K562 (cell line): ENCODE measurements at regions of chr4 and their contacts with region 1.

Region 1: DNA sequence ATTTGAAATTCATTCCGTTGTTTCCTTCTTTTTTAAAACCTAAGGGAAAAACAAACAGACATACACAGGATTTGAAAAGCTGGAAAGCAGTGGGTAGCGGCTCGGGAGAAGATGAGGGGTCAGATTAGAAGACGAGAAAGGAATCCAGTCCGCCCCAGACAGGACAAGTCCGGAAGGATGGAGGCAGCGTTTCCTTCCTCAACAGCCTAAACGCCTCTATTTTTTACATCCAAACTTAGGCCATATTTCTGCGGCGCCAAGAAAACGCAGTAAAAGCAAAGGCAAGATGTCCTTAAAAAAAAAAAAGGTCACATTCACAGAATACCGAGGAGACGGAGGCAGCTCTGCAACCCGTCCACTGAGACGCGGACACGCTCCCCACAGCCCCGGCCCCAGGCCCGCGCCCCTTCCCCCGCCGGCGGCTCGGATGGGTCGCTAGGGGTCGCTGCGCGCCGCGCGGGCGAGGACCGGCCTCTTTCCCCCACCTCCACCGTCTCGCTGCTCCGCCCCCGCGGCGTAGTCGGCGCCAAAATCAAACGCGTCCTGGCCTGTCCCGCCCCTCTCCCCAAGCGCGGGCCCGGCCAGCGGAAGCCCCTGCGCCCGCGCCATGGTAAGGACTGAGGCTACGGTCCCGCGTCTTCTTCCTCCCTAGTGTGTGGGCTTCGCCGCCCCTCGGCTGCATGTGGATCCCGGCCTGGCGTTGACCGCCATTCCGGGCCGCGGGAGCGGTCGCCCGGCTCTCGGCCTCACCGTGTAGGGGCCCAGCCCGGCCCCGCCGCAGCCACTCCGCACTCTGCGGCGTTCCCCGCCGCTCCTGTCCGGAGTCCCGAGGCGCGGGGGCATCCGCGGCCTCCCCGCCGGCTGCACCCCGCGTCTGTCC is at the start of gene MND1:
- DNase-seq: peak; percentile 92 to 95 (median 93)
- ATAC-seq: peak; percentile 92
- H3K4me3 ChIP-seq: peak within 1 kb of the TSS; percentile 85
- H3K27ac ChIP-seq: peak within 1 kb of the TSS; percentile 92
- H3K4me1 ChIP-seq: peaks cover 16 to 33% of the 10 kb centered on the region in 2 experiments
- H3K27me3 ChIP-seq: no peaks in the 10 kb centered on the region
- CTCF ChIP-seq: peak; percentile 76 to 89 (median 81)
- EP300 ChIP-seq: no peak
- POLR2A ChIP-seq: peak; percentile 90
- RAD21 ChIP-seq: peak; percentile 69 to 71
- polyA plus RNA-seq, gene MND1: 59.9 to 74.8 TPM

Region 2: GRCh38 chr4:153189016-153189801 is 155.2 kb before region 1 on chr4:
- CTCF ChIA-PET with region 1: no interaction called
- POLR2A ChIA-PET with region 1: no interaction called
- in situ Hi-C with region 1: no loop called
- intact Hi-C with region 1: no loop called
- DNase-seq: no peak
- ATAC-seq: no peak; the same call in 2 of the 3 replicates
- H3K4me3 ChIP-seq: no peak overlapping the region
- H3K27ac ChIP-seq: no peak overlapping the region
- H3K4me1 ChIP-seq: no peaks in the 10 kb centered on the region; a peak in 1 of 5 replicates
- H3K27me3 ChIP-seq: peaks cover 24 to 43% of the 10 kb centered on the region in 2 experiments
- CTCF ChIP-seq: no peak
- EP300 ChIP-seq: no peak
- POLR2A ChIP-seq: no peak
- RAD21 ChIP-seq: no peak

Region 3: GRCh38 chr4:153409924-153410501 is 65.6 kb after region 1 on chr4:
- CTCF ChIA-PET with region 1: no interaction called
- POLR2A ChIA-PET with region 1: no interaction called
- in situ Hi-C with region 1: no loop called
- intact Hi-C with region 1: loop called (anchors 5 kb)
- DNase-seq: peak; percentile 60 to 92 (median 72)
- ATAC-seq: peak; percentile 93
- H3K4me3 ChIP-seq: no peak overlapping the region
- H3K27ac ChIP-seq: peak overlapping the region; percentile 92
- H3K4me1 ChIP-seq: peaks cover 0 to 17% of the 10 kb centered on the region in 2 experiments; a peak in 3 of 5 replicates
- H3K27me3 ChIP-seq: no peaks in the 10 kb centered on the region
- CTCF ChIP-seq: no peak
- EP300 ChIP-seq: peak; percentile 52; the same call in 1 of the 2 replicates
- POLR2A ChIP-seq: no peak
- RAD21 ChIP-seq: no peak

Region 4: GRCh38 chr4:153432968-153433753 is 88.8 kb after region 1 on chr4:
- CTCF ChIA-PET with region 1: no interaction called
- POLR2A ChIA-PET with region 1: no interaction called
- in situ Hi-C with region 1: no loop called
- intact Hi-C with region 1: loop called (anchors 1 kb)
- DNase-seq: peak; percentile 50 to 85 (median 70)
- ATAC-seq: peak; percentile 95
- H3K4me3 ChIP-seq: no peak overlapping the region
- H3K27ac ChIP-seq: peak overlapping the region; percentile 49; the same call in 1 of the 3 replicates
- H3K4me1 ChIP-seq: peaks cover 10 to 11% of the 10 kb centered on the region in 2 experiments; a peak in 4 of 5 replicates
- H3K27me3 ChIP-seq: no peaks in the 10 kb centered on the region
- CTCF ChIP-seq: peak; percentile 88 to 93 (median 88)
- EP300 ChIP-seq: no peak; the same call in 1 of the 2 replicates
- POLR2A ChIP-seq: no peak
- RAD21 ChIP-seq: peak; percentile 84 to 94

Region 5: GRCh38 chr4:153466081-153466948 is 121.9 kb after region 1 on chr4 and contains the start of gene TMEM131L:
- CTCF ChIA-PET with region 1: no interaction called
- POLR2A ChIA-PET with region 1: interaction called, 4 read pairs
- in situ Hi-C with region 1: no loop called
- intact Hi-C with region 1: loop called (anchors 10 kb)
- DNase-seq: peak; percentile 91 to 94 (median 92)
- ATAC-seq: peak; percentile 82
- H3K4me3 ChIP-seq: peak within 1 kb of the TSS; percentile 83
- H3K27ac ChIP-seq: peak within 1 kb of the TSS; percentile 86
- H3K4me1 ChIP-seq: peaks cover 29 to 40% of the 10 kb centered on the region in 2 experiments
- H3K27me3 ChIP-seq: no peaks in the 10 kb centered on the region
- CTCF ChIP-seq: peak; percentile 30 to 68 (median 46); a peak in 3 of 6 replicates
- EP300 ChIP-seq: no peak; the same call in 1 of the 2 replicates
- POLR2A ChIP-seq: peak; percentile 78
- RAD21 ChIP-seq: peak in 1 of 2 experiments; percentile 41; a peak in 2 of 4 replicates
- polyA plus RNA-seq, gene TMEM131L: 1.2 to 1.6 TPM

Region 6: DNA sequence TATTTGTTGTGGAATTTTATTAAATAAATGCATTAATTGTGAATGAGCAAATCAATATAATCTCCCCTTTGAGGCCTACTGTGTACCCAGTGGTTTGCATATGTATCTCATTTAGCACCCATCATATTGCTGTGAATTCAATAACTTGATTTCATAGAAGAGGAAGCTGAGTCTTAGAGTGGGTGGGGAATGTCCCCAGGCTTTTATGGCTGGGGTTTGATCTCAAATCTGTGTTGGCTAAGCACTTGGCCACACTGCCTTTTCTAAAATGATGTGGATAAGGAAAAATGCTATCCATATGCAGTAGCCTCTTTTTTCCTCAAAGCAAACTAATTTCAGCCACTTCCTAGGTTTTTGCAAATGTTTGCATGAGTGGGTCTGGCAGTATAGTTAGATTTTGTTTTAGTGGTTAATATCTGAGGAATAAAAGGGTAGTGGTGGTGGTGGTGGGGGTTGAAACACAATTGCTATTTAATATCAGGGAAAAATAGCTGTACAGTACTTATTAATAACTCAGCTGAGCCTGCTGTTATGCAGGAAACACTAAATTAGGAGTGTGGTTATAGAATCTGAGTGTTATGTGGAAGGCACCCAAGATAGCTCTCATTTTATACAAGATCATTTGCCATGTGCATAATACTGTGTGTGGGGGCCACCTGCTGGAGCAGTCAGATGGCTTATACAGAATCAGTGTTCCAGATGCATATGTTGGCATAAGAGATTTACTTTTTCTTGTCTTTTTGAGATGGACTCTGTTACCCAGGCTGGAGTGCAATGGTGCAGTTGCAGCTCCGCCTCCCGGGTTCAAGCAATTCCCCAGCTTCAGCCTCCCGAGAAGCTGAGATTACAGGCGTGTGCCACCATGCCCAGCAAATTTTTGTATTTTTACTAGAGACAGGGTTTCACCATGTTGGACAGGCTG is 229.8 kb after region 1 on chr4:
- CTCF ChIA-PET with region 1: interaction called, 44 read pairs
- POLR2A ChIA-PET with region 1: no interaction called
- in situ Hi-C with region 1: loop called (anchors 5 kb)
- intact Hi-C with region 1: loop called (anchors 1 kb)
- DNase-seq: peak in 2 of 4 experiments; percentile 22 to 48
- ATAC-seq: peak; percentile 87
- H3K4me3 ChIP-seq: no peak overlapping the region
- H3K27ac ChIP-seq: no peak overlapping the region
- H3K4me1 ChIP-seq: peaks cover 0 to 5% of the 10 kb centered on the region in 2 experiments; a peak in 1 of 5 replicates
- H3K27me3 ChIP-seq: no peaks in the 10 kb centered on the region
- CTCF ChIP-seq: peak; percentile 49 to 75 (median 50); a peak in 5 of 6 replicates
- EP300 ChIP-seq: no peak
- POLR2A ChIP-seq: no peak
- RAD21 ChIP-seq: peak; percentile 80 to 90

Region 7: DNA sequence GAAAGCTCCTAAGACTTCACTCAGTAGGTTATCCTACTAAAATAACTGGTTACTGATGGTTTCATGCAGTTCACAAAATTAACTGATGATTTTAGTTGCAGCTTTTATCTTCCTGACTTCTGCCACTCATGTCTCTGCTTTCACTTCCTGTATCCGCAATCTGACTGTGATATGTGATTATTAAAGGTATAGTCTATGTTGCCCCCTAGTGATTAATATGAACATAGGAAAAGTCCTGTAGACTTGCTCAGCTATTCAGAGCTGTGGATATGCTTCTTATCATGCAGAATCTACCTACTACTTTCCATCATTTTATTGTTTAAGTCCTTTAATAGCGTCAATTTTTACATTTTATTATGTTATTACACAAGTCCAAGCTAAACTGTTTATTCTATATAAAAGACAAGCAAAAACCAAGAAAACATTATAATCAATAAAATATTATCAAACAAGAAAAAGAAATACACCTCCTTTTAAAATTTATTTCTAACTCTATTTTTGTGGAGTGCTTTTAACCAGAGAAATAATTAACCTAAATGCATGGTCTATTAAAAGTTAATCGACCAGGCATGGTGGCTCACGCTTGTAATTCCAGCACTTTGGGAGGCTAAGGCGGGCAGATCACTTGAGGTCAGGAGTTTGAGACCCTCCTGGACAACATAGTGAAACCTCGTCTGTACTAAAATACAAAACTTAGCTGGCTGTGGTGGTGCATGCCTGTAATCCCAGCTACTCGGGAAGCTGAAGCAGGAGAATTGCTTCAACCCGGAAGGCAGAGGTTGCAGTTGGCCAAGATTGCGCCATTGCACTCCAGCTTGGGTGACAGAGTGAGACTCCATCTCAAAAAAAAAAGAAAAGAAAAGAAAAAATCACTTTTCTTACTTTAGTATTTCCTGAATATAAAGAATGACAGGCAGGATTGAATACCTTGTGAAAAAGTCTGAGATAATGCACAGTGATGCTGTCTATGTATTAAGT is 299.3 kb after region 1 on chr4:
- CTCF ChIA-PET with region 1: interaction called, 4 read pairs
- POLR2A ChIA-PET with region 1: interaction called, 3 read pairs
- in situ Hi-C with region 1: no loop called
- intact Hi-C with region 1: loop called (anchors 1 kb)
- DNase-seq: peak; percentile 44 to 57 (median 55)
- ATAC-seq: peak; percentile 83
- H3K4me3 ChIP-seq: no peak overlapping the region
- H3K27ac ChIP-seq: no peak overlapping the region
- H3K4me1 ChIP-seq: peaks cover 0 to 7% of the 10 kb centered on the region in 2 experiments; a peak in 3 of 5 replicates
- H3K27me3 ChIP-seq: no peaks in the 10 kb centered on the region
- CTCF ChIP-seq: peak; percentile 35 to 63 (median 53); a peak in 5 of 6 replicates
- EP300 ChIP-seq: no peak
- POLR2A ChIP-seq: no peak
- RAD21 ChIP-seq: peak; percentile 29 to 72; a peak in 3 of 4 replicates

Region 8: DNA sequence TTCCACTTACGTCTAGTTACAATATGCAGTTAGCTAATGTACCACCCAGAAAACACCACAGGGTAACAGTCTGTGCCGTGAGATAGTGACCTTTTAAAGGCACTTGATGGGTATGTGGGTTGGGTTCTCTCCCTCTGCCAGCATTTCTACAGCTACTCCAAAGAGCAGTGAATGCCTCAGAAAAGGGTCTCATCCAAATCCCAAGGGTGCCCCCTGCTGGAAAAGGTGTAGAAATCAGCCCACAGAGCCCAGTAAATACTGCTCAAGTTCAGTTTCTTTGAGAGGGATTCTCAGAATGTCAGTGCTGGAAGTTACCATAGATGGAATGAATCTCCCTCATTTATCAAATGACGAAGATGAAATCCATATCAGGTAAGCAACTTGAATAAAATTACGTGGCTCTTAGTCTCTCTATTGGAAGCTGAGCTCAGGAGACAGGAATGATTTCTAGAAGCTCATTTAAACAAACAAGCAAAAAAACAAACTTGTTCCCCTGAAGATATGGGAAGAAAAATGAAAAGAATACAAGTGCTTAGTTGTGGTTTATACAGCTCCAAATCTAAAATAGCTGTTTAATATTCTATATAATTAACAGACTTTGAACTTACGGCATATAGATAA is 405.9 kb after region 1 on chr4:
- CTCF ChIA-PET with region 1: no interaction called
- POLR2A ChIA-PET with region 1: no interaction called
- in situ Hi-C with region 1: no loop called
- intact Hi-C with region 1: loop called (anchors 5 kb)
- DNase-seq: peak; percentile 29 to 78 (median 48)
- ATAC-seq: peak; percentile 92
- H3K4me3 ChIP-seq: no peak overlapping the region
- H3K27ac ChIP-seq: no peak overlapping the region
- H3K4me1 ChIP-seq: no peaks in the 10 kb centered on the region
- H3K27me3 ChIP-seq: peaks cover 4 to 27% of the 10 kb centered on the region in 2 experiments
- CTCF ChIP-seq: peak; percentile 69 to 81 (median 78); a peak in 5 of 6 replicates
- EP300 ChIP-seq: no peak
- POLR2A ChIP-seq: no peak
- RAD21 ChIP-seq: peak; percentile 46 to 77